Activated CD4-positive, alpha-beta T cell treated with anti-CD3 and anti-CD28 coated beads, Interleukin-2, amount 10 ng/mL, durations not matched to agents 24 days and 14 days (primary cell): ENCODE measurements at regions of chr1 and their contacts with region 1.

Region 1: DNA sequence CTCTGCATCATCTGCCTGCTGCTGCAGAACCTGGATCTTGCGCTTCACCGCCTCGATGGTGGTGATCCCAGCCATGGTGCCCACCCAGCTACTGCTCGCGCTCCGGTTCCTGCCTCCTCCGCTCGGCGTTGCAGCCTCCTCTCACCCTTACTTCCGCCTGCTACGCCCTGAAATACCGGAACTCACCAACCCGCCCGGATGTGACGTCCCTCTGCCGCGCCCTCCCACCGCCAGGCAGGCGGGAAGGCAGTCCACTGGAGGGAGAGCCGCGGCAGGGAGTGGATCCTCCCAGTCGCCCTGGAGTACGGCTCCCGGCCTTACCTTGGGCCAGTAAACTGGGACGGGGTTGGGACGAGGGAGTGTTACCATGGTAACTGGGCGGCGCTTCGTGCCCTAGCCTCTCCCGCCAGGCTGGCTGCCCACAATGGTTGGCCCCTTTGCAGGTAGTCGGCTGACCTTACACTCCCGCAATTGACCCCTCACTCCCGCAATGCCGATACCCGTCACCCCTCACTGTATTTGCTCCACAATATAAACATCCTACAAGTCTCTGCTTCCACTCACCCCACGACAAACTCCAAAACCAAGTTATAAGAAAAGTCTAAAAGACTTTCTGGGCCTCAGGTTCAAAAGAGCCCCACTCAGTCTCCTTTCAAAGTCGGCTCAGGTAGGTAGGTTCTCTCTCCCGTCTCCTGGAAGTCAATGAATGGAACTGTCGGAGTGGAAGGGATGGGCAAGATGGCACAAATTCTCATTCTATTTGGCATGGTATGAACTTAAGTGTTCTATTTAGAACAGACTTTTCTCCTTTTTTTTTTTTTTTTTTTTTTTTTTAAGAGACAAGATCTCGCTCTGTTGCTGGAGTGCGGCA is 8.6 kb downstream of the TPM3 start:
- DNase-seq: peak; percentile 99
- H3K4me3 Mint-ChIP-seq: peak overlapping the region; percentile 99
- H3K27ac Mint-ChIP-seq: peak overlapping the region; percentile 100
- H3K4me1 Mint-ChIP-seq: peaks cover 49% of the 10 kb centered on the region
- H3K27me3 Mint-ChIP-seq: peaks cover 4% of the 10 kb centered on the region

Region 2: DNA sequence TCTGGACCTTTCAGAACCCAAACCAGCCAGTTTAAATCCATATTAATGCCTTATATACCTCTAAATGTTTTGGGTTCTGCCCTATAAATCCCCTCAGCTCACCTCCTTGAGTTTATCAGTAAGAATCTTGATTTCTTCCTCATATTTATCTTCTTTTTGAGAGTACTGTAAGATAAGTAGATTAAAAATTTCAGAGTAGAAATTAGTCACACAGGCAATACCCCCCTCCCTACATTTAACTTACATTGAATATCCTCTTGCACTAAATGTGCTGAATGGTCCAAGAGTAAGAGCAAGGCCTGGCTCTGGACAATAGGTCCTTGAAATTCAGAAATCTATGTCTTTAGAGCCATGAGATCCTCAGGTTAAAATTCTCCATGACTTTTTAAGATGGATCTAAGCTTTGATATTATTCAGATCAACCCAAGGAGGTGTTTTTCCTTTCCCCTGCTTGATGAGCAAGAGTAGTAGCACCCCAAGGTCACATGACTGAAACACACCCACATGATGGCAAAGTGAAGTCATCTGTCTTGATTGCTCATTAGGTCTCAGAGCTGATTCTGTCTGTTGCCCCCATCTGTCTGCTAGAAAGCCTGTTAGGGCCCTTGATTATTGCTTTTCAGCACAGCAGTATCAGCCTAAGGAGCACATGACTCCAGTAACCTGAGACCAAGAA is 12.6 kb before region 1 on chr1:
- intact Hi-C with region 1: loop called (anchors 1 kb)
- DNase-seq: peak; percentile 72
- H3K4me3 Mint-ChIP-seq: peak overlapping the region; percentile 45
- H3K27ac Mint-ChIP-seq: peak overlapping the region; percentile 88
- H3K4me1 Mint-ChIP-seq: peaks cover 40% of the 10 kb centered on the region
- H3K27me3 Mint-ChIP-seq: no peaks in the 10 kb centered on the region

Region 3: GRCh38 chr1:154198756-154199562 is 15.7 kb after region 1 on chr1:
- intact Hi-C with region 1: no loop called
- DNase-seq: peak; percentile 83
- H3K4me3 Mint-ChIP-seq: no peak overlapping the region
- H3K27ac Mint-ChIP-seq: no peak overlapping the region
- H3K4me1 Mint-ChIP-seq: peaks cover 3% of the 10 kb centered on the region
- H3K27me3 Mint-ChIP-seq: peaks cover 7% of the 10 kb centered on the region

Region 4: DNA sequence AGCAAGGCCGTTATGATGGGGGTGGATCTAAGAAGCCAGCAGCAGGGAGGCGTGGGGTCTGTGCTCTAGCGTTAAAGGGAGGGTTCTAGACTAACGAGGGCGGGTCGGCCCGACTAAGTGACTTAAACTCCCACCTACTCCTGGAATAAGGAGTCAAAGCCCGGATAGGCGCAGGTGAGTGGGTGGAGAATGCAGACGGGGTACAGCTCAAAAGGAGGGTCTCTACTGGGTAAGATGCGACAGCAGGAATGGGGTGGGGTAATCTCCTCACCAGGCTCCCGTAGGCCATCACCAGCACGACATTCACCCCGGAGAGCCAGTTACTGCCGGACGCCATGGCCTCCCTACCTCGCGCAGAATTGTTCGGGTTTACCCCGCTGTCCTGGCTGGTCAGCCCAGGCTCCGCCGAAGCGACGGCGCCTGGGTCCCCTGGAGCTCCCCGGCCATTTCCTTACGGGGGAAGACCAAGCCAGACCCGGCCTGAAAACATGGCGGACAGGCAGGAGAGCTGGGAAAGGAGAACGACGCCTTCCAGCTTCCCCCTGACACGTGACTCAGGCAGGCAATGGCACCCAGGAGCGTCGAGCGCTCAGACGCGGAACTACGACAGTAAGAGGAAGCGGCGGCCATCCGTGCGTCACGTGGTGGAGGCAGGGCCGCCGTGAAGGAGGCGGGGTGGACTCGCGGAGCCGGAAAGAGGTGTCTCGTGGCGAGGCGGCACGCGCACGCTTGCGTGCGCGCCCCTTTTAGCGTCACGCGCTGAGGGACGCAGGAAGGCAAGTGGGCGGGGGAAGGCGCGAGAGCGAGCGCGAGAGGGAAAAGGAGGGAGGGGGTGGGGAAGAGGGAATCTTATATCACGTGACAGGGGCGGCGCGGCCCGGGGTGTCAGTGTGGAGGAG is 37.0 kb after region 1 on chr1 and contains the start of gene UBAP2L:
- intact Hi-C with region 1: loop called (anchors 1 kb)
- DNase-seq: peak; percentile 100
- H3K4me3 Mint-ChIP-seq: peak within 1 kb of the TSS; percentile 96
- H3K27ac Mint-ChIP-seq: peak within 1 kb of the TSS; percentile 95
- H3K4me1 Mint-ChIP-seq: peaks cover 55% of the 10 kb centered on the region
- H3K27me3 Mint-ChIP-seq: peaks cover 3% of the 10 kb centered on the region
- total RNA-seq, gene UBAP2L: 277 and 281 TPM in 2 replicates

Region 5: DNA sequence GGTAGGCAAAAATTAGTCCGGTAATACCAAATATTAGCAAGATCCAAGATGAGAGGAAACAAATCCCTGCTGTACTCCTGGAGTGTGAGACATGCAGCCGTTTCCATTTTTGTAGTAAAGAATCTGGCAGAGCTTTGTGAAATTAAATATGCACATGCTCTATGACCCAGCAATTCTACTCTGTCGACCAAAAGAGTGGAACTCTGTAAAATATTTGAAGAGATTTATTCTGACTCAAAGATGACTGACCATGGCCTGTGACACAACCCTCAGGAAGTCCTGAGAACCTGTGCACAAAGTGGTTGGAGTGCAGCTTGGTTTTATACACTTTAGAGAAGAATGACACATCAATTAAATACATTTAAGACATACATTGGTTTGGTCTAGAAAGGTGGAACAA is 105.4 kb after region 1 on chr1:
- intact Hi-C with region 1: no loop called
- DNase-seq: no peak
- H3K4me3 Mint-ChIP-seq: no peak overlapping the region
- H3K27ac Mint-ChIP-seq: no peak overlapping the region
- H3K4me1 Mint-ChIP-seq: peaks cover 3% of the 10 kb centered on the region
- H3K27me3 Mint-ChIP-seq: peaks cover 9% of the 10 kb centered on the region

Region 6: DNA sequence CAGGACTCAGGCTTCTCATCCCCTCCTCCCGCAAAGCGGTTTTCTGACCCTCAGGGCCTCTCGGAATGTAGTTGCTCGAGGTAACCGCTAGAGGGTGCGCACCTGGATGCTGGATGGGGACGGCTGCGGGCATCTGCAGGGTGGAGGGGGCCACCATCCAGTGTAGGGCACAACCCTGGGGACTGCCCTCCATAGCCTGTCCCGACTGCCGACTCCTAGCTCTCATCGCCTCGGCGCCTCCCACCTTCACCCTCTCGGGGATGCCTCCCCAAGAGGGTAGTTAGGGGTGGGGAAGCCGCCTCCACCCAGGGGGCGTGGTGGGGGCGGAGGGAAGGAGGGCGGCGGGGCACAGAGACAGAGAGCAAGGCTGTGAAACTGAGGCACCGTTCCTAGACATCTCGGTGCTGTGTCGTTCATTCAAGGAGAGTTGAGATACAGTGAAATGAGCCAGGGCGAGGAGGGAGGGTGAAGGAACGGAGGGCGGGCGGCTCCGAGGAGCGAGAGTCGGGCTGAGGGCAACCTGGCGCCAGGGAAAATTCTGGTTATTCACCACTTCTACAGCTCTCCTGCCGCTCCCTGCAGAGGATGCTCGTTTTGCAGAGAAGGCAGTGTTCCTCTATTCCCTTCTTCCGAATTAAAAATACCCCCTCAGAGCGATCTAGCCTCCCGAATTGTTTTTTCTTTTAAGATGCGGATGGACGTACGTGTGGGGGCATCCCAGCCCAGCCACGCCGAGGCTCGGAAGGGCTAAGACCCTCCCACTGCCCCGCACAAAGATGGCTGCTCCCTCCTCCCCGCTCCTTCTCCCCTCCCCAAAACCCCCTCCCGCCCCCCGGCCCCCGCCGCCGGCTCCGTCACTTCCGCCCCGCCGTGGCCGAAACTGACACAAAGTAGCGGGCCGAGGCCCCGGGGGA is 141.6 kb after region 1 on chr1 and contains the start of gene ATP8B2:
- intact Hi-C with region 1: loop called (anchors 2 kb)
- DNase-seq: peak; percentile 95
- H3K4me3 Mint-ChIP-seq: peak within 1 kb of the TSS; percentile 98
- H3K27ac Mint-ChIP-seq: peak within 1 kb of the TSS; percentile 92
- H3K4me1 Mint-ChIP-seq: peaks cover 34% of the 10 kb centered on the region
- H3K27me3 Mint-ChIP-seq: peaks cover 21% of the 10 kb centered on the region
- total RNA-seq, gene ATP8B2: 49.4 and 49.6 TPM in 2 replicates

Region 7: DNA sequence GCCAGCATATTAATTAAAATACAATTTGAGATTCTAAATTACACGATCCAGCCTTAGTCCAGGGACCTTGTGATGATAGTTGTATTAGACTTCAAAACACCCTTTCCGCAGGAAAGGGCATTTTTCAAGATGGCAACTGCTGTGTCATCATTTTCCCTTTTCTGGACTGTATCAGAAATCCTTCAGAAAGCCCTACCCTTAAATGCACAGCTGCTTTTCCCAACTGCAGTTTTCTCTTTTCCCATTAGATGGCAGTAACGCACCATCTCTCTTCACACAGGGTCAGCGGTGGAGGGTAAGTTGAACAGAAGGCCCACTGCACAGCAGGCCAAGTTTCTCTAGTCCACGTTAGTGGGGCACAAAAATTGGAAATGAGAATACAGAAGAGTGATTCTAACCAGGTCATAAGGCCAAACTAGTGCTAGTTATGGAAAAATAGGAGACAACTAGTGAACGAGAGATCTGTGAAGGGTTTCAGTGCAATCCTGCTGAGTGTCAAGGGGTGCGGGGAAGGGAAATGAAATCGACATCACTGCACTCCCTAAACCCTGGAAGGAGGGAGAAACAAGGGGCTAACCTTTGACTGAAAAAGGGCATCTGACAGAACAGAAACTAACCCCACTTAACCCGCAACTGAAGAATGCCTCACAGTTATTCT is 296.6 kb after region 1 on chr1:
- intact Hi-C with region 1: no loop called
- DNase-seq: peak; percentile 92
- H3K4me3 Mint-ChIP-seq: no peak overlapping the region
- H3K27ac Mint-ChIP-seq: no peak overlapping the region
- H3K4me1 Mint-ChIP-seq: peaks cover 14% of the 10 kb centered on the region
- H3K27me3 Mint-ChIP-seq: peaks cover 11% of the 10 kb centered on the region